Activated naive CD4-positive, alpha-beta T cell treated with anti-CD3 and anti-CD28 coated beads for 36 hours (primary cell): ENCODE measurements at regions of chr2 and their contacts with region 1.

Region 1: DNA sequence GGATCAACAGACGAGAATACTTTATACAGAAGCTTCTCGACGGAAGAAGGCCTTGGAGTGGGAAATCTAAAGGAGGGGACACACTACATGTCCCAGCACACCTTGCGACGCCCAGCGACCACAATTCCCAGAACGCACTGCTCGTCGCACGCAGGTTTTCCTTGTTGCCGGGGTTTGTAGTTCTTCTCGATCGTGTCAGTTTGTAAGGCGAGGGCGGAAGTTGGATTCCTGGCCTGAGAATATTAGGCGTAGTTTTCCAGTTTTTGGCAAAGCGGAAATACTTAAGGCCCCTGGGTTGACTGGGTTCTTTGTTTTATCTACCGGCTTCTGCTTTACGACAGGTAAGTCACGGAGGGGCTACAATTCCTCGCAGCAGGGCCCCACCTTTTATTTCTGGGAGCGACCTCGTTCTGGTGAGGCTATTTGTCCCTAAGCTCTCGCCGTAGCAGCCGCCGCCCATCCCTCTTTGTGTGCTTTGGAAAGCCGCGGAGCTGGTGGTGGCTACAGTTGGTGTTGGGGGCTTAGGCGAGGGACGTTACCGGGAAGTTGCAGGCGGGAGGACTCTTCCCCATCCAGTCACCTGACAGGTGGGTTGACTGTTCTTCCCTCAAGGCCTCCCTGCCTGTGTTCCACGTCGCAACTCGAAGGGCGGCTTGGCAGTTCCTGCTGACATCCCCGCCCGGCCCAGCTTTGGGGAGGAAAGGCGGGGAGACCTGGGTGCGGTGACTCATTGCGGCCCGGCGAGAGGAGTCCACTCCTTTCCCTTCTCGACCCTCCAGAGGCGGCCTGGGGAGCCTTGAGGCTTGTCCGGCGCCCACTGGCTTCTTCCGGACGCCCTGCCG is at the start of gene DYNC1I2:
- DNase-seq: peak; percentile 88
- H3K4me3 Mint-ChIP-seq: peak within 1 kb of the TSS; percentile 84
- H3K27ac Mint-ChIP-seq: peak within 1 kb of the TSS; percentile 85
- H3K4me1 Mint-ChIP-seq: peaks cover 15% of the 10 kb centered on the region
- H3K27me3 Mint-ChIP-seq: no peaks in the 10 kb centered on the region
- total RNA-seq, gene DYNC1I2: 37.8 to 38.9 TPM

Region 2: GRCh38 chr2:171433763-171434670 is 253.5 kb before region 1 on chr2 and contains the starts of genes DCAF17 and METTL8:
- CTCF ChIA-PET with region 1: no interaction called
- intact Hi-C with region 1: loop called (anchors 1 kb)
- DNase-seq: peak; percentile 96
- H3K4me3 Mint-ChIP-seq: peak within 1 kb of the TSS; percentile 86
- H3K27ac Mint-ChIP-seq: peak within 1 kb of the TSS; percentile 94
- H3K4me1 Mint-ChIP-seq: peaks cover 54% of the 10 kb centered on the region
- H3K27me3 Mint-ChIP-seq: no peaks in the 10 kb centered on the region
- total RNA-seq, gene DCAF17: 21.1 to 21.3 TPM
- total RNA-seq, gene METTL8: 32.9 to 34.5 TPM

Region 3: DNA sequence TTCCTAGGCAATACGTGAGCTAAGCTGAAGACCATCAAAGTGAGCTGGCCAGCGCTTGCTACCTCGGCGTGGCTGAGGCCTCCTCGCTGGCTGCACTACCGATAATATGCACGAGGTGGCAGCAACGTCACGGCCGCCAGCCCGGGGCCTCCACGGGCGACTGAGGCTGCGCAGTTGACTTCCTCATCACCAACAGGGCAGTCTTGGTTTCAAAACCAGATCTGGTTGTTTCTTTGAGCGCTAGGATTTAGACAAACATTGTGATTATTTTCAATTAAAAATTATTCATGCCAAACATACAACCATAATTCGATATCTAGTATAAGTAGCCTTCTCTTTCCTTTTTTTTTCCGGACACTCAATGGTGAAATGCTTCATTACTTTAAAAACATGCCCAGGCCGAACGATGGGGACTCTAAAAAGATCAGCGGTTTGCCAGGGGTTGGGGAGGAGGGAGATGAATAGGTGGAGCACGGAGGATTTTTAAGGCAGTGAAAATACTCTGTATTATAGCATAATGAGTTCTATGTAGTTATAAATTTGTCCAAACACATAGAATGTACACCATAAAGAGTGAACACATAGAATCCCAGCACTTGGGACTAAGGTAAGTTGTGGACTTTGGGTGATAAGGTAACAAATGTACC is 113.2 kb before region 1 on chr2:
- CTCF ChIA-PET with region 1: interaction called, 4 read pairs
- intact Hi-C with region 1: loop called (anchors 1 kb)
- DNase-seq: peak; percentile 86
- H3K4me3 Mint-ChIP-seq: no peak overlapping the region
- H3K27ac Mint-ChIP-seq: peak overlapping the region; percentile 53
- H3K4me1 Mint-ChIP-seq: peaks cover 5% of the 10 kb centered on the region
- H3K27me3 Mint-ChIP-seq: no peaks in the 10 kb centered on the region